ENCODE measurements at regions of chr9 and their contacts with region 1.

Region 1: GRCh38 chr9:21381448-21382339 is 3.5 kb downstream of the IFNA2 start:
- DNase-seq: peak; percentile 91
- ATAC-seq: peak; percentile 97
- H3K4me3 ChIP-seq: peak overlapping the region in 2 of 5 experiments; percentile 16 to 34
- H3K4me3 Mint-ChIP-seq: peak overlapping the region; percentile 0
- H3K27ac ChIP-seq: no peak overlapping the region
- H3K27ac Mint-ChIP-seq: peak overlapping the region; percentile 28
- H3K4me1 ChIP-seq: peaks cover 20 to 25% of the 10 kb centered on the region in 2 donors
- H3K4me1 Mint-ChIP-seq: peaks cover 33% of the 10 kb centered on the region
- H3K27me3 ChIP-seq: peaks cover 0 to 24% (median 13%) of the 10 kb centered on the region in 4 experiments
- H3K27me3 Mint-ChIP-seq: peaks cover 23% of the 10 kb centered on the region
- CTCF ChIP-seq: no peak

Region 2: GRCh38 chr9:21334701-21335632 is 46.7 kb before region 1 on chr9 and contains the start of gene KLHL9:
- CTCF ChIA-PET with region 1: interaction called, 5 read pairs
- POLR2A ChIA-PET with region 1: no interaction called
- intact Hi-C with region 1: loop called (anchors 1 kb)
- DNase-seq: peak; percentile 93
- ATAC-seq: peak; percentile 89
- H3K4me3 ChIP-seq: peak within 1 kb of the TSS; percentile 83 to 97 (median 89)
- H3K4me3 Mint-ChIP-seq: peak within 1 kb of the TSS; percentile 95
- H3K27ac ChIP-seq: peak within 1 kb of the TSS; percentile 90
- H3K27ac Mint-ChIP-seq: peak within 1 kb of the TSS; percentile 92
- H3K4me1 ChIP-seq: peaks cover 18 to 27% of the 10 kb centered on the region in 2 donors
- H3K4me1 Mint-ChIP-seq: peaks cover 49% of the 10 kb centered on the region
- H3K27me3 ChIP-seq: peaks cover 0 to 6% (median under 1%) of the 10 kb centered on the region in 4 experiments
- H3K27me3 Mint-ChIP-seq: peaks cover 12% of the 10 kb centered on the region
- CTCF ChIP-seq: no peak
- total RNA-seq, gene KLHL9: 17.5 and 17.6 TPM in 2 replicates

Region 3: GRCh38 chr9:21395778-21396717 is 14.4 kb after region 1 on chr9:
- CTCF ChIA-PET with region 1: interaction called, 14 read pairs
- POLR2A ChIA-PET with region 1: no interaction called
- intact Hi-C with region 1: loop called (anchors 2 kb)
- DNase-seq: peak; percentile 74
- ATAC-seq: peak; percentile 52
- H3K4me3 ChIP-seq: peak overlapping the region in 4 of 5 experiments; percentile 22 to 52 (median 32)
- H3K4me3 Mint-ChIP-seq: peak overlapping the region; percentile 68
- H3K27ac ChIP-seq: no peak overlapping the region
- H3K27ac Mint-ChIP-seq: no peak overlapping the region
- H3K4me1 ChIP-seq: peaks cover 8 to 11% of the 10 kb centered on the region in 2 donors
- H3K4me1 Mint-ChIP-seq: peaks cover 18% of the 10 kb centered on the region
- H3K27me3 ChIP-seq: peaks cover 3 to 57% (median 37%) of the 10 kb centered on the region in 4 experiments
- H3K27me3 Mint-ChIP-seq: peaks cover 69% of the 10 kb centered on the region
- CTCF ChIP-seq: peak; percentile 87

Region 4: GRCh38 chr9:21443849-21444625 is 62.3 kb after region 1 on chr9:
- CTCF ChIA-PET with region 1: interaction called, 9 read pairs
- POLR2A ChIA-PET with region 1: interaction called, 8 read pairs
- intact Hi-C with region 1: loop called (anchors 1 kb)
- DNase-seq: peak; percentile 88
- ATAC-seq: peak; percentile 92
- H3K4me3 ChIP-seq: no peak overlapping the region
- H3K4me3 Mint-ChIP-seq: peak overlapping the region; percentile 27
- H3K27ac ChIP-seq: peak overlapping the region in 1 of 2 donors; percentile 53
- H3K27ac Mint-ChIP-seq: peak overlapping the region; percentile 5
- H3K4me1 ChIP-seq: peaks cover 12 to 14% of the 10 kb centered on the region in 2 donors
- H3K4me1 Mint-ChIP-seq: peaks cover 13% of the 10 kb centered on the region
- H3K27me3 ChIP-seq: peaks cover 0 to 12% (median 3%) of the 10 kb centered on the region in 4 experiments
- H3K27me3 Mint-ChIP-seq: peaks cover 17% of the 10 kb centered on the region
- CTCF ChIP-seq: no peak

Region 5: DNA sequence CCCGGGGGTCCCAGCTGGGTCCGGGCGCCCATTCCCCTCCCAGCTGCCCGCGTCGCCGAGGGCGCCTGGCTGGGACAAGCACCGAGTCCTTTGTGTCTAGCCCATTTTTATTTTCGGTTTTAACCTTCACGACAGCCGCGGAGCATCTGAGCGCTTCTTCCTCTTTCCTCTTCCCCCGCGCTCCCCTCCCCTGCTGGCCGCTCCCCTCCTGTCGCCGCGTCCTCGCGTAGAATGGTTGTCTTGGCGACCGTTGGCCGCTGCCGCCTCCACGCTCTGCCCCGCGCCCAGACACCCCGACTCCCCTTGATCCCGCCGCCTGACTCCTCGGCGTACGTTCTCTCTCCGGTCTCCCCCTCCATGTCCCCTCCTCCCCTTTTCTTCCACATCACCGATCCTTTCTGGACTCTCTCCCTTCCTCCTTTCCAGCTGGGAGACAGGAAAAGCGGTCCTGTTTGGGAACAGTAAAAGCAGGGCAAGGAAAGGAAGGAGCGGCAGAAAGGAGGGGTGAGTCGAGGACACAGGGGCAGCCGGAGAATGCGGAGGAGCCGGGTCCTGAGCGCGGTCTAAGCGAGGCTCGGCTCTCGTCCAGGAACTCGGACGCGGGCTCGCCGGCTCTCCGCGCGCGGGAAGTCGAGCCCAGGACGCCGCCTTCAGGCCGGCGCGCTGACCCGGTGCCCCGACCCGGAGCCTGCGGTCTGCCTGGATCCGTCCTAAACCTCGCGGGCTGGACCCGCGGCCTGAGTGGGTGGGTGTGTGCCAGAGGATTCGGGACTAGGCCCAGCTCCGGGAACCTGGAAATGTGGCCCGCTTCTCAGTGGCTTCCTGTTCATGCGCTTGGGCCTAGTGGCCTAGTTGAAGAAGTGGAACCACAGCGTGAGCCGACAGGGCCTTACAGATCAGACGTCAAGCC is 613.7 kb after region 1 on chr9:
- CTCF ChIA-PET with region 1: no interaction called
- POLR2A ChIA-PET with region 1: no interaction called
- intact Hi-C with region 1: loop called (anchors 5 kb)
- DNase-seq: peak; percentile 96
- ATAC-seq: peak; percentile 78
- H3K4me3 ChIP-seq: peak overlapping the region; percentile 76 to 97 (median 86)
- H3K4me3 Mint-ChIP-seq: peak overlapping the region; percentile 97
- H3K27ac ChIP-seq: peak overlapping the region; percentile 87 to 94
- H3K27ac Mint-ChIP-seq: peak overlapping the region; percentile 95
- H3K4me1 ChIP-seq: peaks cover 18 to 19% of the 10 kb centered on the region in 2 donors
- H3K4me1 Mint-ChIP-seq: peaks cover 19% of the 10 kb centered on the region
- H3K27me3 ChIP-seq: peaks cover 0 to 11% (median 2%) of the 10 kb centered on the region in 4 experiments
- H3K27me3 Mint-ChIP-seq: no peaks in the 10 kb centered on the region
- CTCF ChIP-seq: peak; percentile 15

Measured in B cell (primary cell).